ENCODE measurements at regions of chr11 and their contacts with region 1.

Region 1: DNA sequence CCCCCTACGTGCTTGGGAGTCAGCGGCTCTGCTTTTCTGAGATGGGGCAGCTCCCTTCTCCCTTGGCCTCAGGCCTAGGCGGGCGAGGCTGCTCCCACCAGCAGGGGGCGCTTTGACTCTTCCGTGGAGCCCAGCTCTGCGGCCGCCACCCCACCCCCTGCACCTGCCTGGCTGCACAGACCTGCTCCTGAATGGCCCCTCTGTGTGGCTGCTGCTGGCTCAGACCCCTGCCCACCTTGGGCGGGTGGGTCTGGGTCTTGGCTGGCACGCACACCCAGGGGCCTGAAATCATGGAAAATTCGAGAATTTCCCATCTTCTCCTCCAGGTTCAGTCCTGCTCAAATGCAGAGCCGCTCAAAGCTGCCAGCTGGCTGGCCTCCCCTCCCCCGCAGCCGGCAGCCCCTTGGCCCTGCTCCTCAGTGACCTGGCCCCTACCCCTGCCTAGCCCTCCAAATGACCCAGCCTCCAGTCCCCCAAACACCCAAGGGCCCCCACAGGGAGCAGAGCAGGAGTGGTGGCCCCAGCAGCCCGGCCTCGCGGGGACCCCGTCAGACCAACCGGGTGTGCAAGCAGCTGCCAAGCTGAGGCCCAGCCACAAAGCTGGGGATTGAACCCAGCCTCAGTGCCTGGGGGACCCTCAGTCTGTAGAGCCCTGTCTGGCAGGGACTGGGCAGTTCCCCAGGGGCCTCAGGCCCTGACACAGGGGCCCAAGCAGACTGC is 9.0 kb downstream of the PRR33 start:
- DNase-seq: peak; percentile 97
- H3K4me3 ChIP-seq: no peak overlapping the region; a peak in 1 of 4 replicates
- H3K27ac ChIP-seq: peak overlapping the region in 1 of 2 experiments; percentile 72; a peak in 1 of 4 replicates
- H3K4me1 ChIP-seq: peaks cover 0 to 19% of the 10 kb centered on the region in 2 experiments; a peak in 1 of 4 replicates
- H3K27me3 ChIP-seq: no peaks in the 10 kb centered on the region
- CTCF ChIP-seq: peak; percentile 82
- EP300 ChIP-seq: no peak
- RAD21 ChIP-seq: peak; percentile 89

Region 2: GRCh38 chr11:1852877-1853276 is 29.8 kb before region 1 on chr11 and contains the start of gene LSP1:
- CTCF ChIA-PET with region 1: interaction called, 23 read pairs
- POLR2A ChIA-PET with region 1: no interaction called
- DNase-seq: no peak
- H3K4me3 ChIP-seq: no peak within 1 kb of the TSS
- H3K27ac ChIP-seq: no peak within 1 kb of the TSS
- H3K4me1 ChIP-seq: no peaks in the 10 kb centered on the region; a peak in 1 of 4 replicates
- H3K27me3 ChIP-seq: no peaks in the 10 kb centered on the region
- CTCF ChIP-seq: no peak
- EP300 ChIP-seq: no peak
- RAD21 ChIP-seq: no peak
- polyA plus RNA-seq, gene LSP1: 0.34 and 0.38 TPM in 2 replicates

Region 3: DNA sequence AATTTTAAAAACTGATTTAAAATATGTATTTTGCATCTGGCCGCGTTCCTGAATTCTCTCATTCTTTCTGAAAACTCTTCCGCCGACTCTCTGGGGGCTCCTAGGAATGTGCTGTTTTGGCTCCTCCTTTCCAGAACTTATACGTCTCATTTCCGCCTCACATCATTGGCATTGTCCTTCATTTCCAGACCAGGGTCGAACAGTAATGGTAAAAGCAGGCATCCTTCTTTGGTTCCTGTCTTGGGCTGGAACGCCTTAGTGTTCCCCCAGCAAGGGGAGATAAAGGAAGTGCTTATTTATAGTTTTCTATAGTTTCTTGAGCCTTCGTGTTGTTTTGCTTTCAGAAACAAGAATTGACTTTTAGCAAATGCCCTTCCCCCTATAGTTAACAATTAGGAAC is 25.9 kb after region 1 on chr11:
- CTCF ChIA-PET with region 1: interaction called, 11 read pairs
- POLR2A ChIA-PET with region 1: no interaction called
- DNase-seq: no peak
- H3K4me3 ChIP-seq: no peak overlapping the region
- H3K27ac ChIP-seq: no peak overlapping the region
- H3K4me1 ChIP-seq: no peaks in the 10 kb centered on the region; a peak in 1 of 4 replicates
- H3K27me3 ChIP-seq: 0 out of 2 replicates have a peak, but pooled peaks cover 17% of the 10 kb centered on the region
- CTCF ChIP-seq: no peak
- EP300 ChIP-seq: no peak
- RAD21 ChIP-seq: no peak

Region 4: DNA sequence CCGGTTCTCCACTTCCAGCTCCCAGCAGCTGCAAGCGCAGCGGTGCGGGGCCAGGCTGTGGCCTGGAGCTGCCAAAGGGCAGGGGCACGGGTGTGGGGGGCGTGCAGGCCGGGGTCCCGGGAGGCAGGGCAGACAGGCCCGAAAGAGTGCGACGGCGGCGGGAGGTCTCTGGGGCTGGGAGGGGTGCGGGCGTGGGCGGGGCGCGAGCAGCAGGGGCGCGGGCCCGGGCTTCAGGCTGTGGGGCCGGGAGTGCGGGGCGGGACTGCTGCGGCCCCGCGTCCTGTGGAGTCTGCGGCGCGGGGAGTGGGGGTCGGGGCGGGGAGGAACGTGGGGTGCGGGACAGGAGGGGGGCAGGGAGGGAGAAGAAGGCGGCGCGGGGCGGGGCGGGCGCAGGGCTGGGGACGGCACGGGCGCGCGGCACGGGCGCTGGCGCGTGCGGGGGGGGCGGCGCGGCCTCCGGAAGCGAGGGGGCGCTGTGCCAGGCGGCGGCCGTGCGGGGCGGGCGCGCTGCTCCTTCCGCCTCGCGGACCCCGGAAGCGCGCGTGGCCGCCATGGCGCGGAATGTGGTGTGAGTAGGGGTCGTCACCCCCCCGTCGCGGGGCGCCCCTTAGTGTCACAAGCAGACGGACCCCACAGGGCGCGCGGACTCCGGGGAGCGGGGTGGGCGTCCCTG is 64.3 kb after region 1 on chr11 and contains the start of gene MRPL23:
- CTCF ChIA-PET with region 1: interaction called, 74 read pairs
- POLR2A ChIA-PET with region 1: interaction called, 13 read pairs
- DNase-seq: no peak
- H3K4me3 ChIP-seq: no peak within 1 kb of the TSS
- H3K27ac ChIP-seq: no peak within 1 kb of the TSS
- H3K4me1 ChIP-seq: peaks cover 0 to 15% of the 10 kb centered on the region in 2 experiments; a peak in 1 of 4 replicates
- H3K27me3 ChIP-seq: no peaks in the 10 kb centered on the region
- CTCF ChIP-seq: no peak
- EP300 ChIP-seq: no peak
- RAD21 ChIP-seq: no peak
- polyA plus RNA-seq, gene MRPL23: 226 and 264 TPM in 2 replicates

Region 5: GRCh38 chr11:1983601-1983961 is 100.9 kb after region 1 on chr11:
- CTCF ChIA-PET with region 1: interaction called, 17 read pairs
- POLR2A ChIA-PET with region 1: interaction called, 7 read pairs
- DNase-seq: no peak
- H3K4me3 ChIP-seq: no peak overlapping the region
- H3K27ac ChIP-seq: no peak overlapping the region; a peak in 1 of 4 replicates
- H3K4me1 ChIP-seq: no peaks in the 10 kb centered on the region
- H3K27me3 ChIP-seq: no peaks in the 10 kb centered on the region
- CTCF ChIP-seq: no peak
- EP300 ChIP-seq: no peak
- RAD21 ChIP-seq: no peak

Region 6: DNA sequence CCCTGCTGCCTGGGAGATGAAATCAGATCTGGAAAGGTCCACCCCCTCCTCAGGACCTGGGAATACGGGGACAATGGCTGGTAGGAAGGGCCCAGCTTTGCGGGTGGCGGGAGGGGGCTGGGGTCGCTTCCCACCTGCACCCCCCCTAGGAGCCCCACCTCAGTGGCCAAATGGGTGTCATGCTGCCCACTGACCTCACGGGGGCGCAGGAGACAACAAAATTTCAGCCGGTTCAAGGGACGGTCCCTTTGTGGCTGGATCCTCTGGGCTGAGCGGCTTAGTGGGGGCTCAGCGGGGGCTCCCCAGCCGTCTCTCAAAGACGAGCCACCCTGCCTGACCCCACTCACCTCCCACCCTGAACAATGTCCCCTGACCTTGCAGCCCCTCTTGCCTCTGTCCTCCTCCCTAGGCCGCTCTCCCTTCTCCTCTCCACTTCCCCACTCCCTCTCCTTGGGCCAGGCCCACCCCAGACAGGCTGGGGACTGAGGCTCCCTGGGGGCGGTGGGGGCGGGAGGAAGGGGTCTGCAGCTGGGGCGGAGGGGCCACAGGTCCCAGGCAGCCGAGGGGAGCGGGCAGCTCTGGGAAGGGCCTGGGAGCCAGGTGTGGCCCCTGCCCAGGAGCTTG is 154.3 kb after region 1 on chr11:
- CTCF ChIA-PET with region 1: interaction called, 15 read pairs
- POLR2A ChIA-PET with region 1: no interaction called
- DNase-seq: no peak
- H3K4me3 ChIP-seq: no peak overlapping the region
- H3K27ac ChIP-seq: no peak overlapping the region
- H3K4me1 ChIP-seq: no peaks in the 10 kb centered on the region
- H3K27me3 ChIP-seq: no peaks in the 10 kb centered on the region
- CTCF ChIP-seq: no peak
- EP300 ChIP-seq: no peak
- RAD21 ChIP-seq: no peak

Measured in SK-N-SH (cell line).